A549 (cell line): ENCODE measurements at regions of chr10 and their contacts with region 1.

Region 1: GRCh38 chr10:116696919-116697318 is 45.4 kb downstream of the HSPA12A start:
- DNase-seq: no peak
- ATAC-seq: no peak
- H3K4me3 ChIP-seq: no peak overlapping the region
- H3K27ac ChIP-seq: no peak overlapping the region
- H3K4me1 ChIP-seq: no peaks in the 10 kb centered on the region
- CTCF ChIP-seq: no peak
- EP300 ChIP-seq: no peak
- POLR2A ChIP-seq: no peak
- RAD21 ChIP-seq: no peak

Region 2: GRCh38 chr10:116511365-116511764 is 185.6 kb before region 1 on chr10:
- CTCF ChIA-PET with region 1: no interaction called
- POLR2A ChIA-PET with region 1: no interaction called
- DNase-seq: no peak
- ATAC-seq: no peak
- H3K4me3 ChIP-seq: no peak overlapping the region
- H3K27ac ChIP-seq: no peak overlapping the region
- H3K4me1 ChIP-seq: no peaks in the 10 kb centered on the region
- CTCF ChIP-seq: no peak
- EP300 ChIP-seq: no peak
- POLR2A ChIP-seq: no peak
- RAD21 ChIP-seq: no peak

Region 3: DNA sequence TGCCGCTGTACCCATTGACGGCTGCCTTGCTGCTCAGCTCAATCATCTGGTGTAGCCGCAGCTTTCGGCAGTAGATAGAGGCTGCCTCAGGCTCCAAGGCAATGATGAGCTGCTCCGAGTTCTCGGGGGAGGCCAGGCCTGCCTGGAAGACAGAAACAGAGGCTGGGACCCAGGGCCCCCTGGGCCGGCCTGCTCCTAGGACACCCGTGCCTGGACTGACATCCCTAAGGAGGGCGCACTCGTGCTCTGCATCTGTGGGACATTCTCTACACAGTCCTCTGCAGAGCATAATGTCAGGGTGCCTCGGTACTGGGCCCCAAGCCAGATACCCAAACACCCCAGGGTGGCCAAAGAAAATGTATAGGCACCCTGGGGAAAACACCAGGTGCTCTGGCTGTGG is 13.1 kb before region 1 on chr10:
- CTCF ChIA-PET with region 1: interaction called, 36 read pairs
- POLR2A ChIA-PET with region 1: no interaction called
- DNase-seq: no peak
- ATAC-seq: no peak; a peak in 1 of 6 replicates
- H3K4me3 ChIP-seq: no peak overlapping the region
- H3K27ac ChIP-seq: no peak overlapping the region
- H3K4me1 ChIP-seq: no peaks in the 10 kb centered on the region
- CTCF ChIP-seq: no peak
- EP300 ChIP-seq: no peak
- POLR2A ChIP-seq: no peak
- RAD21 ChIP-seq: no peak

Region 4: GRCh38 chr10:116765547-116766162 is 68.7 kb after region 1 on chr10:
- CTCF ChIA-PET with region 1: no interaction called
- POLR2A ChIA-PET with region 1: no interaction called
- DNase-seq: no peak
- ATAC-seq: no peak
- H3K4me3 ChIP-seq: no peak overlapping the region
- H3K27ac ChIP-seq: peak overlapping the region; percentile 6 to 86; a peak in 4 of 6 replicates
- H3K4me1 ChIP-seq: peaks cover 40% of the 10 kb centered on the region
- CTCF ChIP-seq: 0 out of 3 replicates have a peak, but pooled peaks have one; percentile 14
- EP300 ChIP-seq: no peak
- POLR2A ChIP-seq: no peak
- RAD21 ChIP-seq: 0 out of 5 replicates have a peak, but pooled peaks of 1 of the 2 experiments have one; percentile 5